Activated T-helper 2 cell treated with anti-CD3 and anti-CD28 coated beads, Interferon-gamma antibody, Interleukin-2, Interleukin-4, amounts not matched to agents 10 μg/mL and 5 μg/mL and 100 μg/mL, durations not matched to agents 14 hours and 24 hours and 36 hours (primary cell): ENCODE measurements at regions of chr17 and their contacts with region 1.

Region 1: GRCh38 chr17:21284319-21285163 is at the start of gene MAP2K3:
- DNase-seq: peak; percentile 97
- H3K4me3 Mint-ChIP-seq: peak within 1 kb of the TSS; percentile 96
- H3K27ac Mint-ChIP-seq: peak within 1 kb of the TSS; percentile 91
- H3K4me1 Mint-ChIP-seq: peaks cover 44% of the 10 kb centered on the region
- H3K27me3 Mint-ChIP-seq: no peaks in the 10 kb centered on the region
- total RNA-seq, gene MAP2K3: 149 and 157 TPM in 2 replicates

Region 2: GRCh38 chr17:20966870-20967269 is 317.7 kb before region 1 on chr17:
- intact Hi-C with region 1: no loop called
- DNase-seq: no peak
- H3K4me3 Mint-ChIP-seq: no peak overlapping the region
- H3K27ac Mint-ChIP-seq: no peak overlapping the region
- H3K4me1 Mint-ChIP-seq: no peaks in the 10 kb centered on the region
- H3K27me3 Mint-ChIP-seq: peaks cover 16% of the 10 kb centered on the region

Region 3: GRCh38 chr17:21043286-21044232 is 241.0 kb before region 1 on chr17:
- intact Hi-C with region 1: loop called (anchors 1 kb)
- DNase-seq: peak; percentile 96
- H3K4me3 Mint-ChIP-seq: peak overlapping the region; percentile 75
- H3K27ac Mint-ChIP-seq: peak overlapping the region; percentile 81
- H3K4me1 Mint-ChIP-seq: peaks cover 17% of the 10 kb centered on the region
- H3K27me3 Mint-ChIP-seq: peaks cover 3% of the 10 kb centered on the region

Region 4: GRCh38 chr17:21140911-21141310 is 143.6 kb before region 1 on chr17:
- intact Hi-C with region 1: no loop called
- DNase-seq: no peak
- H3K4me3 Mint-ChIP-seq: no peak overlapping the region
- H3K27ac Mint-ChIP-seq: no peak overlapping the region
- H3K4me1 Mint-ChIP-seq: no peaks in the 10 kb centered on the region
- H3K27me3 Mint-ChIP-seq: no peaks in the 10 kb centered on the region

Region 5: GRCh38 chr17:21214015-21214776 is 70.3 kb before region 1 on chr17 and contains the start of gene TMEM11:
- intact Hi-C with region 1: loop called (anchors 1 kb)
- DNase-seq: peak; percentile 94
- H3K4me3 Mint-ChIP-seq: peak within 1 kb of the TSS; percentile 94
- H3K27ac Mint-ChIP-seq: peak within 1 kb of the TSS; percentile 94
- H3K4me1 Mint-ChIP-seq: peaks cover 40% of the 10 kb centered on the region
- H3K27me3 Mint-ChIP-seq: no peaks in the 10 kb centered on the region
- total RNA-seq, gene TMEM11: 27.1 and 30.5 TPM in 2 replicates

Region 6: DNA sequence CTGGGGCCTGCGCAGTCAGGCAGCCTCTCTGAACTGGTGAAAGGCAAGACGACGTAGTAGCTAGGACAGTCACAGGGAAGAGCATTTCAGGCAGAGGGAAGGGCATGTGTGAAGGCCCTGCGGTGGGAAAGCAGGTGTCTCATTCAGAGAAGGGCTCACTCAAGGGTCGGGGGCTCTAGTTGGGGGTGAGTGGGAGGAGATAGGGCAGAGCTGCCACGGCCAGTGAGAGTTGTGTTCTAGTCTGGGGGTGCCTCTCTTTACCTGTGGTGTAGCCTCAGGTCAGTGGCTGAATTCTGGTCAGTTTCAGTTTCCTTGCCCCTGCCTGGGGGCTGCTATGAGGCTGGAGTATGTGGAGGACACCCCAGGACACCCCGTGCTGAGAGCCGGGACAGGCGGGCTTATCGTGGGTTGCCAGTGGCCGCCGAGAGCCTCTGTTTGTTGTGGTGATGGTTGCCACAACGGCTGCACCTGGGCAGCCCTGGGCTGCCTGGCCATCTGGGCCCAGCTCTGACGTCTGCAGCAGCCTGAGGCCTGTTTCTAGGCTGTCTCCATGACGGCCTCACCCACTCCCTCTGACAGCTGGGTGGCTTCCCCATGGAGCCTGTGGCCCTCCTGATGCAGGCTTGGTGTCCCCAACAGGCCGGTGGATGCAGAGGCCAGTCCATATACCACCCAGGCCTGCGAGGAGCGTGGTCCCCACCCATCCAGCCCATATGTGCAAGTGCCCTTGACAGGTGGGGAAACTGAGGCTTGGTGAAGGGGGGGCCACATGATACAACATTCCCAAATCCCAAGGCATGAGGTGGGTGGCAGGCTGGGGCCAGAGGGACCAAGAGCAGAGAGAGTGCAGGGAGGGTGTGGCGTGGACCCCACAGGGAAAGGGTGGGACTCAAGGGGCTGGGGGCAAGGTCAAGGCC is 10.8 kb after region 1 on chr17:
- intact Hi-C with region 1: no loop called
- DNase-seq: no peak
- H3K4me3 Mint-ChIP-seq: no peak overlapping the region
- H3K27ac Mint-ChIP-seq: no peak overlapping the region
- H3K4me1 Mint-ChIP-seq: peaks cover 4% of the 10 kb centered on the region
- H3K27me3 Mint-ChIP-seq: no peaks in the 10 kb centered on the region

Region 7: GRCh38 chr17:21318439-21318838 is 33.9 kb after region 1 on chr17:
- intact Hi-C with region 1: loop called (anchors 5 kb)
- DNase-seq: no peak
- H3K4me3 Mint-ChIP-seq: no peak overlapping the region
- H3K27ac Mint-ChIP-seq: no peak overlapping the region
- H3K4me1 Mint-ChIP-seq: peaks cover 4% of the 10 kb centered on the region
- H3K27me3 Mint-ChIP-seq: peaks cover 4% of the 10 kb centered on the region

Region 8: GRCh38 chr17:21511363-21512198 is 227.0 kb after region 1 on chr17:
- intact Hi-C with region 1: loop called (anchors 1 kb)
- DNase-seq: peak; percentile 43
- H3K4me3 Mint-ChIP-seq: peak overlapping the region; percentile 54
- H3K27ac Mint-ChIP-seq: no peak overlapping the region
- H3K4me1 Mint-ChIP-seq: peaks cover 14% of the 10 kb centered on the region
- H3K27me3 Mint-ChIP-seq: peaks cover 57% of the 10 kb centered on the region